ENCODE measurements at regions of chr21 and their contacts with region 1.

Region 1: DNA sequence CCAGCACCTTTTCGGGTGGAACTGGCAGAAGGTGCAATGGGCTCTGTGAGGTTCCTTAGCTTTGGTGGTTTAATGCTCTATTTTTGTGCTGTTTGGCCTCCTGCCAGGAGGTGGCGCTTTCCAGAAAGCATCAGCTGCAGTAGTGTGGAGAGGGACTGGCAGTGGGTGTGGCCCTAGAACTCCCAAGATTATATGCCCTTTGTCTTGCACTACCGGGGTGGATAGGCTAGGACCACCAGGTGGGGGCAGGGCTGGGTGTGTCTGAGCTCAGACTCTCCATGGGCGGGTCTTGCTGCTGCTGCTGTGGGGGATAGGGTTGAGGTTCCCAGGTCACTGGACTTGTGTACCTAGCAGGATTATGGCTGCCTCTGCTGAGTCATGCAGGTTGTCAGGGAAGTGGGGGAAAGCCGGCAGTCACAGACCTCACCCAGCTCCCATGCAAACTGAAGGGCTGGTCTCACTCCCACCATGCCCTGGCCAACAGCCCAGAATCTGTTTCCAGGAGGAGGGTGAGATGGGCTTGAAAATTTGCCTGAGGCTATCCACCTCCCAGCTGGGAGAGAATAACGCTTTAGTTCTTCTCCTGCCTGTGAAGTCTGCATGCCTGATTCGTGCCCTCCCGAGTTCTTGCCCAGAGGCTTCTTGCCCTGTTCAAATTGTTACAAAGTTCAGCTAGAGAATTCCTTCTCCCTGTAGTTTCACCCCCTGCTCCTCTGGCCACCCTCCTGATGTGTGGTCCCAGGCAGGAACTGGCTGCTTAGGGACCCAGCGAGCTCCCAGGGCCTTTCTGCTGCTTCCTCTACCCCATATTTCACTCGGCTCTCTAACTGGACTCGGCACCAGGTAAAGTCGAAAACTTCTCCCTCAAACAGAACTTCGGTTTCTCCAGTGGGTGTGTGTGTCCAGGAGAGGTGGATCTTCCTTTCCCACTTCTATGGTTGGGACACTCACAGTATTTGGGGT is 76.5 kb upstream of the BTG3 start:
- DNase-seq: no peak
- ATAC-seq: no peak; the same call in 2 of the 3 replicates
- H3K4me3 ChIP-seq: no peak overlapping the region
- H3K27ac ChIP-seq: no peak overlapping the region
- H3K4me1 ChIP-seq: peaks cover 3% of the 10 kb centered on the region
- H3K27me3 ChIP-seq: no peaks in the 10 kb centered on the region
- CTCF ChIP-seq: peak; percentile 17 to 50 (median 23); a peak in 4 of 6 replicates
- EP300 ChIP-seq: no peak
- POLR2A ChIP-seq: no peak
- RAD21 ChIP-seq: peak; percentile 57

Region 2: GRCh38 chr21:17660449-17660848 is 28.7 kb before region 1 on chr21:
- CTCF ChIA-PET with region 1: no interaction called
- POLR2A ChIA-PET with region 1: no interaction called
- RAD21 ChIA-PET with region 1: no interaction called
- SMC1A ChIA-PET with region 1: no interaction called
- in situ Hi-C with region 1: no loop called
- intact Hi-C with region 1: no loop called
- DNase-seq: no peak
- ATAC-seq: no peak
- H3K4me3 ChIP-seq: no peak overlapping the region
- H3K27ac ChIP-seq: no peak overlapping the region
- H3K4me1 ChIP-seq: no peaks in the 10 kb centered on the region
- H3K27me3 ChIP-seq: no peaks in the 10 kb centered on the region
- CTCF ChIP-seq: no peak
- EP300 ChIP-seq: no peak
- POLR2A ChIP-seq: no peak
- RAD21 ChIP-seq: no peak

Region 3: DNA sequence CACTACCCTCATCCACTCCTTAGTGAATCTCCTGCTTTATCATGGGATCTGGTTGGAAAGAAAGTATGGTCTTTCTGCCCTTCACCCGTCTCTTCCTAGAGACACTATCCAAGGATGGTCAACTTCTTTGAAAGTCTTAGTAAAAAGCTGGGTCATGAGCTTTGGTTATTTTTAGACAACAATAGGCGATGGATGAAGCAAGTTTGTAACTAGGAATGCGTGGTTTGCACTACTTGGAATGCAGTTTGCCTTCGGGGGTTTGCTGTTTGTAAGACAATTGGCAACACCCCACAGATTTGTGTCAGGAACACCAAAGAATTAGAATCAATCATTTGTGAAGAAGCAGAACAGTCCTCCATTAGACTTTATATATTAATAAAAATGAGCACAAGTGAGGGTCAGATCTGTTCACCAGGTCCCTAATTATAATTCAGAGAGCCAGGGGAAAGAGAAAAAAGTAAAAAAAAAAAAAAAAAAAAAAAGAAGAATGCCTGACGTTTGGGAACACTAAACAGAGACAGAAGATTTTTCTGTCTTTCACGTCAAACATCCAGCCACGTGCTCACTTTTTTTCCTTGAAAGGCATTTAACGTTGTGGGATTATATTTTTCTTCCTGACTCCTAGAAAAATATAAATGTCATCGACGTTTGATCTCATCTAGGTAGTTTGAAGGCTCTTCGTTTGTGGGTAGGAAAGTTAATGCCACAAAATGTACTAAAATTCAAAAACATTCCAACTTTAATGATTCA is 15.8 kb before region 1 on chr21:
- CTCF ChIA-PET with region 1: interaction called, 13 read pairs
- POLR2A ChIA-PET with region 1: no interaction called
- RAD21 ChIA-PET with region 1: no interaction called
- SMC1A ChIA-PET with region 1: no interaction called
- in situ Hi-C with region 1: no loop called
- intact Hi-C with region 1: no loop called
- DNase-seq: no peak
- ATAC-seq: no peak
- H3K4me3 ChIP-seq: no peak overlapping the region
- H3K27ac ChIP-seq: no peak overlapping the region
- H3K4me1 ChIP-seq: no peaks in the 10 kb centered on the region
- H3K27me3 ChIP-seq: no peaks in the 10 kb centered on the region; a peak in 1 of 4 replicates
- CTCF ChIP-seq: no peak
- EP300 ChIP-seq: no peak
- POLR2A ChIP-seq: no peak
- RAD21 ChIP-seq: no peak

Region 4: GRCh38 chr21:17903029-17903806 is 214.0 kb after region 1 on chr21:
- CTCF ChIA-PET with region 1: interaction called, 23 read pairs
- POLR2A ChIA-PET with region 1: no interaction called
- RAD21 ChIA-PET with region 1: interaction called, 5 read pairs
- SMC1A ChIA-PET with region 1: interaction called, 15 read pairs
- in situ Hi-C with region 1: no loop called
- intact Hi-C with region 1: no loop called
- DNase-seq: no peak
- ATAC-seq: peak; percentile 68
- H3K4me3 ChIP-seq: no peak overlapping the region
- H3K27ac ChIP-seq: no peak overlapping the region
- H3K4me1 ChIP-seq: peaks cover 3% of the 10 kb centered on the region
- H3K27me3 ChIP-seq: no peaks in the 10 kb centered on the region
- CTCF ChIP-seq: peak in 1 of 3 experiments; percentile 40; a peak in 1 of 6 replicates
- EP300 ChIP-seq: no peak
- POLR2A ChIP-seq: no peak
- RAD21 ChIP-seq: peak; percentile 49; the same call in 1 of the 2 replicates

Measured in GM12878 (cell line).